Activated B cell treated with CpG ODN at 0.5 μM for 24 hours (primary cell): ENCODE measurements at regions of chr16 and their contacts with region 1.

Region 1: GRCh38 chr16:67593288-67593687 is 31.0 kb downstream of the CTCF start:
- DNase-seq: no peak
- ATAC-seq: no peak
- H3K4me3 Mint-ChIP-seq: no peak overlapping the region
- H3K27ac Mint-ChIP-seq: no peak overlapping the region
- H3K4me1 Mint-ChIP-seq: peaks cover 20% of the 10 kb centered on the region
- H3K27me3 Mint-ChIP-seq: no peaks in the 10 kb centered on the region
- CTCF ChIP-seq: no peak

Region 2: GRCh38 chr16:67628216-67628615 is 34.9 kb after region 1 on chr16:
- CTCF ChIA-PET with region 1: no interaction called
- POLR2A ChIA-PET with region 1: no interaction called
- intact Hi-C with region 1: loop called (anchors 5 kb)
- DNase-seq: no peak
- ATAC-seq: no peak
- H3K4me3 Mint-ChIP-seq: no peak overlapping the region
- H3K27ac Mint-ChIP-seq: no peak overlapping the region
- H3K4me1 Mint-ChIP-seq: no peaks in the 10 kb centered on the region
- H3K27me3 Mint-ChIP-seq: no peaks in the 10 kb centered on the region
- CTCF ChIP-seq: no peak